CD4-positive, alpha-beta memory T cell (primary cell): ENCODE measurements at regions of chr7 and their contacts with region 1.

Region 1: DNA sequence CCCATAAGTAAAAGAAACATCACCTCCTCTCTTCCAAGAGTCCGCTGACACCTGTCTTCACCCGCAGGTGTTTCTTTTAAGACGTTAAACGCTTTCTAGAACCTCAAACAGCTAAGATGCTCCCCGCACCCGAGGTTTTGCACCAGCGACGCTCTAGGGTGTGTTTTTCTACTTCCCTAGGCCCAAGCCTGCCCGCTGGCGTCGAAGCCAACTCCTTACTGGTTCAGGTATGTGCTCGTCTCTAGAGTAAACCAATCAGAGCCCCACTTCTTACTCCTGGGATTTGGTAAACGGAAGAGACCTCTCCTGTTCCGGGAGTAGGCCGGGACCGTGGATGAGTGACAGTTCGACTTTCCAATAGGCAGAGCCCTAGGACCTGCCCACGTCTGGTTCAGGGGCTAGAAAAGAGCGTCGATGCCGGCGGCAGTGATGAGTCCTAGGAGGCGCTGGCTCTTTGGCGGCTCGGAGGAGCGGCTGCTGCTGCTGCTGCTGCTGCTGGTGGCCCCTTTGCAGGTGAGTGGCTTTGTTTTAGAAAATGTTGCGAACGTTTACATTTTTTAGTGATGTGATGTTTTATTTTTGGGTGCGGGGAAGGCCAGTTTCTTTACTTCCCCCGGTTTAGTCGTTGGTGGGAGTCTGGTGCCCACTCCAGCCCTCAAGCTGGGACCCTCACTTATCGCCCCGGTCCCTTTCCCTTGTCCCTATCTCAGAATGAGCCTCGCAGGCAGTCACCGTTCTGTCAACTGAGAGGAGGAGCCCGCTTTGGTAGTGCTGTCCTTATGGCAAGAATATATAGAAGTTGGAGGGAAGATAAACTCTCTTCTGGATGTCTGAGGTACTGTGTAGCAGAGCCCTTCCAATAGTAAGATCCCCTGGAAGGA is at the start of gene BPGM:
- DNase-seq: peak; percentile 98 to 100 (median 99)
- H3K4me3 ChIP-seq: peak within 1 kb of the TSS; percentile 66 to 68
- H3K4me3 Mint-ChIP-seq: no peak within 1 kb of the TSS
- H3K27ac ChIP-seq: peak within 1 kb of the TSS; percentile 84
- H3K27ac Mint-ChIP-seq: no peak within 1 kb of the TSS
- H3K4me1 ChIP-seq: peaks cover 32% of the 10 kb centered on the region
- H3K4me1 Mint-ChIP-seq: peaks cover 17 to 22% (median 20%) of the 10 kb centered on the region in 4 donors
- H3K27me3 ChIP-seq: no peaks in the 10 kb centered on the region
- H3K27me3 Mint-ChIP-seq: no peaks in the 10 kb centered on the region
- total RNA-seq, gene BPGM: 13.7 to 14.7 TPM

Region 2: DNA sequence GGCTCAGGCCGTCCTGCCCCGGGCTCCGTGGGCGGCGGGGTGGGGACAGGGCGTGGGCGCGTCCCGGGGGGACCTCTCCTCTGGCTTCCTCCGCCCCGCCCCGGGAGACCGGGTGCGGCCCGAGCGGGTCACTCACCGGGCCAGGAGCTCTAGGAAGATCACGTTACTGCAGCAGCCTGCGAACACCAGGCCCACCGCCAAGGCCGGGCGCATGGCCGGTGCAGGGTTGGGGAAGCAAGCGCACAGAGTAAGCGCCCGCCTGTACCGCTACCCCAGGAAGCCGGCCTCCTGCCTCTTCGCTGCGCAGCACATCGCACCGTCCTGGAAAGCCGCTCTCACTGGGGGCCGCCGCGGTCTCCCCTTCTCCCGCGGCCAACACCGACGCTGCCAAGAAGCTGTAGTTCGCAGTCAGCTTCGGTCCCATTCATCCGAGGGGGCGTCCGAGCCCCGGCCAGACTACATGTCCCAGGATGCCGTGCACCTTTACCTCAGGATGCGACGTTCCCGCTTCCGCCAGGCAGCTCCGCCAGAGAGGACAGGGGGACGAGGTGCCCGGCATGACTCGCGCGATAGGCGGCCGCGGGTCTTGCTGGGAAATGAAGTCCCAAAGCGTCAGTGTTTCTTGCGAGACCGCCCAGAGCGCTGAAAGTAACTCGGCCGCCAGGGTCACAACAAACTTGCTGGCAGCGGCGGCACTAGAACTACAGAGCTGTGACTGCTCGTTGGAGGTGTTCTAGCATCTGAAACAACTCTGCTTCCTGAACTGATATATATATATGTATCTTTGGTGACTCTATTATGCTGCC is 329.9 kb before region 1 on chr7 and contains the start of gene SLC35B4:
- CTCF ChIA-PET with region 1: no interaction called
- POLR2A ChIA-PET with region 1: no interaction called
- intact Hi-C with region 1: loop called (anchors 5 kb)
- DNase-seq: peak; percentile 90 to 96 (median 93)
- H3K4me3 ChIP-seq: peak within 1 kb of the TSS; percentile 2 to 81
- H3K4me3 Mint-ChIP-seq: peak within 1 kb of the TSS; percentile 95 to 98 (median 96)
- H3K27ac ChIP-seq: peak within 1 kb of the TSS; percentile 59
- H3K27ac Mint-ChIP-seq: peak within 1 kb of the TSS; percentile 83 to 97 (median 92)
- H3K4me1 ChIP-seq: peaks cover 17% of the 10 kb centered on the region
- H3K4me1 Mint-ChIP-seq: peaks cover 12 to 24% (median 17%) of the 10 kb centered on the region in 4 donors
- H3K27me3 ChIP-seq: no peaks in the 10 kb centered on the region
- H3K27me3 Mint-ChIP-seq: peaks cover 2% of the 10 kb centered on the region in 2 donors
- total RNA-seq, gene SLC35B4: 10.5 to 10.7 TPM

Region 3: DNA sequence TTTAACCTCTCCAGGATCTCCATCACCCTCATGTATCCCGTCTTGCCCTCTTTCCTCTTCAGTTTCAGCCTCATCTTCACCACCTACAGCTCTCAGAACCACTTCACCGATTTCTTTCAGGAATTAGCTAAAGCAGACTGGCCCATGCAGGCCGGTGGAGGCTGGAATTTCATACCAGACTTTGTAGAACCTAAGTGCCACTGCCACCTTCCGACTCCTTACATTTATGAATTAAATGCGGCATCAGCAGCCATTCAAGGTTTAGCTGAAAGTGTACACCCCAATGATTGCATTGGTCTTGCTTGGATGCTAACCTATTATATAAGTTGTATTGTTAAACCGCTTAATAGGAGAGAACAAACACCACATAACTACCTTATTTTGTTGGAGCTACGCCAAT is 154.7 kb before region 1 on chr7:
- CTCF ChIA-PET with region 1: no interaction called
- POLR2A ChIA-PET with region 1: no interaction called
- intact Hi-C with region 1: no loop called
- DNase-seq: no peak
- H3K4me3 ChIP-seq: no peak overlapping the region
- H3K4me3 Mint-ChIP-seq: no peak overlapping the region
- H3K27ac ChIP-seq: no peak overlapping the region
- H3K27ac Mint-ChIP-seq: no peak overlapping the region
- H3K4me1 ChIP-seq: no peaks in the 10 kb centered on the region
- H3K4me1 Mint-ChIP-seq: no peaks in the 10 kb centered on the region
- H3K27me3 ChIP-seq: no peaks in the 10 kb centered on the region
- H3K27me3 Mint-ChIP-seq: peaks cover 11 to 13% of the 10 kb centered on the region in 2 donors

Region 4: DNA sequence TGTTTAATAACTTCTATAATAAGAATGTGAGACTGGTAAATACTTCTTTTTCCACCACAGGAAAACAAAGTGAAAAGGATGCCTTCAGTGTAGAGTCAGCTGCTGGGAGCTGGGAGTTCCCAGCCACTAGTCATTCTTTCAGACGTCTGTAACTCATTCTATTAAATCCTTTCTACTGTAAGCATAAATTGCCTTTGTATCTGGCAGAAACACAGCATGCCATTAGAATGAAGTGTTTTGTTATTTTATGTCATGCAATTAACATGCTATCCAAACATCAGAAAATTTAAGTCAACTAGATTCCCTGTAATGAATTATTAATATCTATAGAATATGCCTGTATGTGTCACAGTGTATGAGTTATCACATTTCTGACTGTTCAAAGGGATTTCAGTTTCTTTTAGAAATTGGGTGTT is 14.3 kb after region 1 on chr7:
- CTCF ChIA-PET with region 1: interaction called, 9 read pairs
- POLR2A ChIA-PET with region 1: interaction called, 26 read pairs
- intact Hi-C with region 1: no loop called
- DNase-seq: no peak
- H3K4me3 ChIP-seq: no peak overlapping the region
- H3K4me3 Mint-ChIP-seq: no peak overlapping the region
- H3K27ac ChIP-seq: no peak overlapping the region
- H3K27ac Mint-ChIP-seq: no peak overlapping the region
- H3K4me1 ChIP-seq: no peaks in the 10 kb centered on the region
- H3K4me1 Mint-ChIP-seq: peaks cover 16 to 25% (median 17%) of the 10 kb centered on the region in 4 donors
- H3K27me3 ChIP-seq: no peaks in the 10 kb centered on the region
- H3K27me3 Mint-ChIP-seq: no peaks in the 10 kb centered on the region

Region 5: GRCh38 chr7:134710859-134711624 is 64.4 kb after region 1 on chr7:
- CTCF ChIA-PET with region 1: interaction called, 3 read pairs
- POLR2A ChIA-PET with region 1: interaction called, 26 read pairs
- intact Hi-C with region 1: loop called (anchors 1 kb)
- DNase-seq: peak; percentile 70 to 92 (median 80)
- H3K4me3 ChIP-seq: no peak overlapping the region
- H3K4me3 Mint-ChIP-seq: peak overlapping the region in 7 of 8 donors; percentile 57 to 78 (median 66)
- H3K27ac ChIP-seq: peak overlapping the region; percentile 45
- H3K27ac Mint-ChIP-seq: peak overlapping the region; percentile 87 to 99 (median 96)
- H3K4me1 ChIP-seq: peaks cover 17% of the 10 kb centered on the region
- H3K4me1 Mint-ChIP-seq: peaks cover 10 to 22% (median 18%) of the 10 kb centered on the region in 4 donors
- H3K27me3 ChIP-seq: no peaks in the 10 kb centered on the region
- H3K27me3 Mint-ChIP-seq: no peaks in the 10 kb centered on the region

Region 6: DNA sequence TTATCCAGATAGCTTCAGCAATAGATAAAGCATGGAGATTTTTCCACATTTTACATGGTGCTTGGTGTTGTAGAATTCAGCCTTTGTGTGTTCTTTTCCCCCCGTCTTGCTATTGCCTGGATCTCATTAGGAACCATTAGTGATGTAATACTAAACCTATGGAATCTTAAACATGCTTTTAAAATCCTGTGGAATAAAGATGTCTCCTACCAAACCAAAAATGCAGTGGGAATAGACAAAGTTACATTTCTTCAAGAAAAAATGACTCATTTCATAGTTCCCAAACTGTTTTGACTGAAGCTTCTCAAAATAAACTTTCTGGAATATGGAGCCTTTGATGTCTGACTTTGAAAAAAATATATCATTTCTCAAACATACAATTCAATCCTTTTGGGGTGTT is 176.7 kb after region 1 on chr7:
- CTCF ChIA-PET with region 1: no interaction called
- POLR2A ChIA-PET with region 1: no interaction called
- intact Hi-C with region 1: no loop called
- DNase-seq: no peak
- H3K4me3 ChIP-seq: no peak overlapping the region
- H3K4me3 Mint-ChIP-seq: no peak overlapping the region
- H3K27ac ChIP-seq: no peak overlapping the region
- H3K27ac Mint-ChIP-seq: no peak overlapping the region
- H3K4me1 ChIP-seq: no peaks in the 10 kb centered on the region
- H3K4me1 Mint-ChIP-seq: no peaks in the 10 kb centered on the region
- H3K27me3 ChIP-seq: no peaks in the 10 kb centered on the region
- H3K27me3 Mint-ChIP-seq: peaks cover 2% of the 10 kb centered on the region in 2 donors

Region 7: DNA sequence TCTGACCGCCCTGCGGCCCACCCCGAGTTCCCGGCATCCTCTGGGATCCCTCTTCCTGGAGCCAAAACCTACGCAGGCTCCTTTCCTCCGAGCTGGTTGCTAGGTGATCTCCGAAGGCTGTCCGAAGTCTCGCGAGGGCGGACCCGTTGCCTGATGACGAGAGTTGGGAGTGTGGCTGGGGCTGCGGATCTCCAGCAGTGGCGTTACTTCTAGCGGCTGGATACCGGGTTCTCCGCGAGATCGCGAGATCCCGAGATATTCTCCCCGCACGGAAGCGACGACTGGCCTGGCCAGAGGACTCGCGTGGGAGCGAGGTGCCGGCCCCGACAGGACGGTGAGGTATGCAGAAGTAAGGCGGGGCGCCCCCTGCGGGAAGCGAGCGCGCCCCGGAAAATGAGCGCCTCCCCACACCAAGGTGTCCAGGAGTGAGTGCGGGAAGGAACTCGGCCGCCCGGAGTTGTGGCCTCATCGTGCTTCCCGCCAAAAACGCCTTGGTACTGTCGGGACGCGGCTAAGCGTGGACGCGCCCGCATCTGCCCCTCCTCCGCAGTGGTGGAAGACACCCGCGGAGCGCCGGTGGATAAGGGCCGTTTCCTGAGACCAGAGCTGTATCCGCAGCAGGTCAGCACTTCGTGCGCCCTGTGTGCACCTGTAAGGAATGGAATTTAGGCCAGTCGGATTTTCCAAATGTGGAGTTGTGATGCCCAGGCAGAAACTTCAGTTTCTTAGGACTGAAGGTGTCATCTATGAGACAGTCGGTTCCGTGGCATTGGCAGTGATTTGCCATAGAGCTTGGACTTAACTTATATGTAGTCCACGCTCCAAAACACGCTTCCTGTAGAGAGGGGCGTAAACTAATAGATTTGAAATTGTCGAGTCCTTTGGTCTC is 339.9 kb after region 1 on chr7 and contains the start of gene AGBL3:
- CTCF ChIA-PET with region 1: interaction called, 14 read pairs
- POLR2A ChIA-PET with region 1: no interaction called
- intact Hi-C with region 1: loop called (anchors 1 kb)
- DNase-seq: peak; percentile 87 to 91 (median 88)
- H3K4me3 ChIP-seq: peak within 1 kb of the TSS; percentile 60 to 86
- H3K4me3 Mint-ChIP-seq: peak within 1 kb of the TSS; percentile 96 to 99 (median 98)
- H3K27ac ChIP-seq: peak within 1 kb of the TSS; percentile 80
- H3K27ac Mint-ChIP-seq: peak within 1 kb of the TSS; percentile 98 to 100 (median 98)
- H3K4me1 ChIP-seq: peaks cover 20% of the 10 kb centered on the region
- H3K4me1 Mint-ChIP-seq: peaks cover 26 to 41% (median 31%) of the 10 kb centered on the region in 4 donors
- H3K27me3 ChIP-seq: no peaks in the 10 kb centered on the region
- H3K27me3 Mint-ChIP-seq: no peaks in the 10 kb centered on the region
- total RNA-seq, gene AGBL3: 5.5 to 6.2 TPM

Region 8: DNA sequence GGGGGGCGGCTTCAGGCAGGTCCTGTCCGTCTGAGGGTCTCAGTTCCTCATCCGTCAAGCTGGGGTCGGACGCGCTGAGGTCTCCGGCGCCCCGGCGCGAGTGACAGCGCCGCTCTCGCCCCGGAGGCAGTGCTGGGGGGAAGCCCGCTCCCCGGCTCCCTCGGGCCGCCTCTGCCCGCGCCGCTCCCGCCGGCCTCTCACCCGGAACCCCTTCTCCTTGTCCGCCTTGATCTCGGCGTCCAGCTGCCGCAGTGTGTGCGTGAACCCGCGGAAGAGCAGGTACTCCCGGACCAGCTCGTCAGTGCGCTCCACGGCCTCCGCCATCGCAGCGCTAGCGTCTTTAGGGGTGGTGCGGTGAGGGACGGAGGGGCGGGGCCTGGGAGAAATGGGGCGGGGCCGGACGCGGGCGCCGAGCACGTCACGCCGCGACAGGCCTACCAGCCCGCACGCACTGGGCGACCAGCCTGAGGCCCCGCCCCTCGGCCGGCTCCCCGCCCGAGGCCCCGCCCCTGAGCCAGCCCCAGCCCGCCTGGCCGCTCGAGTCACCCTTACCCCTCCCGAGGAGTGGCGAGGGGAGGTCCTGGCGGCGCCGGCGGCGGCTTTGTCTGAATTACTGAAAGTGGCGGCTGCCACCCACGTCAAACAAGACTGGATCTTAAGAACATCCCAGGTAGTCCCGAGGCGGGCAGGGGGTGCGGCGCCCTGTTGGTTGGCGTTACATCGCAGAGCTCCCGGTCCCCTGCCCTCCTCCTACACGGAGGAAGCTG is 564.7 kb after region 1 on chr7 and contains the start of gene WDR91:
- CTCF ChIA-PET with region 1: interaction called, 5 read pairs
- POLR2A ChIA-PET with region 1: interaction called, 3 read pairs
- intact Hi-C with region 1: loop called (anchors 1 kb)
- DNase-seq: peak; percentile 89 to 95 (median 90)
- H3K4me3 ChIP-seq: peak within 1 kb of the TSS; percentile 71 to 80
- H3K4me3 Mint-ChIP-seq: peak within 1 kb of the TSS; percentile 96 to 99 (median 98)
- H3K27ac ChIP-seq: peak within 1 kb of the TSS; percentile 85
- H3K27ac Mint-ChIP-seq: peak within 1 kb of the TSS; percentile 92 to 99 (median 99)
- H3K4me1 ChIP-seq: peaks cover 27% of the 10 kb centered on the region
- H3K4me1 Mint-ChIP-seq: peaks cover 13 to 46% (median 28%) of the 10 kb centered on the region in 4 donors
- H3K27me3 ChIP-seq: no peaks in the 10 kb centered on the region
- H3K27me3 Mint-ChIP-seq: no peaks in the 10 kb centered on the region
- total RNA-seq, gene WDR91: 29.1 to 29.4 TPM

Region 9: DNA sequence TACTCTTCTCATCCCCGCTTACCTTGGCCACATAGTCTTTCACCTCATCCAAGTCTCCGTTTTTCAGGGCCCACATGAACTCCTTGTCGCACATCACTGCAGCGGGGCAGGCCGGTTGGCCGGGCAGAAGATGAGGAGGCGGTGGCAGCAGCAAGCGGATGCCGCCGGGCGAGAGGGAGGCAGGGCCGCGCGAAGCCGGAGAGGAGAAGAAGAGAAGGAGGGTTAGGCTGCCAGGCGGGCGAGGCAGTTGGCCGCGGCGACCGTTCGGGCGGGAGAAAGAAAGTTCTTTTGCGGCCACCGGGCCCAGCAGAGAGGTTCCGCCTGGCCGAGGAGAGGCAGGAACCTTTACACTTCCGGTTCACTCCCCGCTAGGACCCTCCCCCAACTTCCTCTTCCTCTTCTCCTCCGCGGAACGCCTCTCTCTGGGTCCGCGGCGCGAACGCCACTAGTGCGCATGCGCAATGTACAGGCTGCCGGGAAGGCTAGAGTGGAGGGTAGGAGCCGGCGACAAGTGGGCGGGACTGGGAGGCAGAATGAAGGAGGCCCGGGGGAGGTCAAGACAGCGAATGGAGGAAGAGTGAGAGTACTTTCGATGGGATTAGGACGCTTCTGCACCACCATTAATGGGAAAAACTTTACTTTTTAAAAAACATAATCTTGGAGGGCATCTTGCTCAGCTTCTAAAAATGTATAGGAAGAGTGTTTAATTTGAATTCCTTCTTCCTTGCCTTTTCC is 1330.5 kb after region 1 on chr7 and contains the start of gene MTPN:
- CTCF ChIA-PET with region 1: no interaction called
- POLR2A ChIA-PET with region 1: no interaction called
- intact Hi-C with region 1: loop called (anchors 5 kb)
- DNase-seq: peak; percentile 95 to 98 (median 97)
- H3K4me3 ChIP-seq: peak within 1 kb of the TSS; percentile 82 to 90
- H3K4me3 Mint-ChIP-seq: peak within 1 kb of the TSS; percentile 89 to 100 (median 96)
- H3K27ac ChIP-seq: peak within 1 kb of the TSS; percentile 93
- H3K27ac Mint-ChIP-seq: peak within 1 kb of the TSS; percentile 89 to 98 (median 95)
- H3K4me1 ChIP-seq: peaks cover 88% of the 10 kb centered on the region
- H3K4me1 Mint-ChIP-seq: peaks cover 59 to 94% (median 76%) of the 10 kb centered on the region in 4 donors
- H3K27me3 ChIP-seq: no peaks in the 10 kb centered on the region
- H3K27me3 Mint-ChIP-seq: no peaks in the 10 kb centered on the region
- total RNA-seq, gene MTPN: 83.1 to 84.5 TPM